Heart right ventricle (tissue), 16 donors: ENCODE measurements at regions of chr2 and their contacts with region 1.

Region 1: GRCh38 chr2:43210467-43211303 is 15.7 kb downstream of the ZFP36L2 start:
- DNase-seq: peak in 1 of 2 donors; percentile 61
- ATAC-seq: peak; percentile 32 to 83 (median 67)
- H3K4me3 ChIP-seq: no peak overlapping the region
- H3K27ac ChIP-seq: peak overlapping the region in 5 of 10 donors; percentile 38 to 72 (median 55)
- H3K4me1 ChIP-seq: peaks cover 0 to 49% (median 5%) of the 10 kb centered on the region in 9 donors
- H3K27me3 ChIP-seq: no peaks in the 10 kb centered on the region
- CTCF ChIP-seq: no peak

Region 2: DNA sequence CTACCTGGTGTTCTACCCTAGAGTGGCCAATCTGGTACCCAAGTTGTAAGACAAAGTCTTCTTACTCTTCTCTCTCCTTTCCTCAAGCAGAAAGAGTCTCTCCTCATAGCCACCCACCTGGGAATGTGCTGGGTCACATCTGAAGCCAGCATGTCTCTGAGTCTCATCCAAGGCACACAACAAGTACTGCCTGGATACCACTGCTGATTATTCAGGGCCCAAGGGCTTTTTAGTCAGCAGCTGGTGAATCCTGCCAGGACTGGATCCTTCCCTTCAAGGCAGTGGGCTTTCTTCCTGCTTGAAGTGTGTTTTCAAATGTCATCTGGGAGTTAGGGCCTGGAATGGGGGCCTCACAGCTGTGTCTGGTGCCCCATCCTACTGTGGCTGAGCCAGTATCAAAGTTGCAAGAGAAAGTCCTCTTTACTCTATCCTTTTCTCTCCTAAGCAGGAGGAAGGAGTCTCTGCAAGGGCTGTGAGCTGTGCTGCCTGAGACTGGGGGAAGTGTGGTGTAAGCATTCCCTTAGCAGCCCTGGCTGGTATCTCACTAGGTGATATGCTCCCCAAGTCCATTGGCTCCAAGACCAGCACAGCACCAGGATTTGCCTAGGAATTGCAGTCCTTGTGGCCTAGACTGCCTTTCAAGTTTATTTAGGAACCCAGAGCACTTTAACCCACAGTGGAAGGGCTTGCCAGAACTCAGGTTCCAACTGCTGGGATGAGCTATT is 473.9 kb before region 1 on chr2:
- intact Hi-C with region 1: no loop called
- DNase-seq: no peak
- ATAC-seq: no peak
- H3K4me3 ChIP-seq: no peak overlapping the region
- H3K27ac ChIP-seq: no peak overlapping the region
- H3K4me1 ChIP-seq: no peaks in the 10 kb centered on the region
- H3K27me3 ChIP-seq: no peaks in the 10 kb centered on the region
- CTCF ChIP-seq: no peak

Region 3: GRCh38 chr2:43169987-43170386 is 40.7 kb before region 1 on chr2:
- intact Hi-C with region 1: loop called in 4 of 10 experiments (anchors 1 to 5 kb)
- DNase-seq: no peak
- ATAC-seq: no peak
- H3K4me3 ChIP-seq: no peak overlapping the region
- H3K27ac ChIP-seq: peak overlapping the region in 4 of 10 donors; percentile 32 to 89 (median 72)
- H3K4me1 ChIP-seq: peaks cover 9 to 78% (median 43%) of the 10 kb centered on the region in 9 donors
- H3K27me3 ChIP-seq: no peaks in the 10 kb centered on the region
- CTCF ChIP-seq: peak in 8 of 9 donors; percentile 11 to 57 (median 42)

Region 4: DNA sequence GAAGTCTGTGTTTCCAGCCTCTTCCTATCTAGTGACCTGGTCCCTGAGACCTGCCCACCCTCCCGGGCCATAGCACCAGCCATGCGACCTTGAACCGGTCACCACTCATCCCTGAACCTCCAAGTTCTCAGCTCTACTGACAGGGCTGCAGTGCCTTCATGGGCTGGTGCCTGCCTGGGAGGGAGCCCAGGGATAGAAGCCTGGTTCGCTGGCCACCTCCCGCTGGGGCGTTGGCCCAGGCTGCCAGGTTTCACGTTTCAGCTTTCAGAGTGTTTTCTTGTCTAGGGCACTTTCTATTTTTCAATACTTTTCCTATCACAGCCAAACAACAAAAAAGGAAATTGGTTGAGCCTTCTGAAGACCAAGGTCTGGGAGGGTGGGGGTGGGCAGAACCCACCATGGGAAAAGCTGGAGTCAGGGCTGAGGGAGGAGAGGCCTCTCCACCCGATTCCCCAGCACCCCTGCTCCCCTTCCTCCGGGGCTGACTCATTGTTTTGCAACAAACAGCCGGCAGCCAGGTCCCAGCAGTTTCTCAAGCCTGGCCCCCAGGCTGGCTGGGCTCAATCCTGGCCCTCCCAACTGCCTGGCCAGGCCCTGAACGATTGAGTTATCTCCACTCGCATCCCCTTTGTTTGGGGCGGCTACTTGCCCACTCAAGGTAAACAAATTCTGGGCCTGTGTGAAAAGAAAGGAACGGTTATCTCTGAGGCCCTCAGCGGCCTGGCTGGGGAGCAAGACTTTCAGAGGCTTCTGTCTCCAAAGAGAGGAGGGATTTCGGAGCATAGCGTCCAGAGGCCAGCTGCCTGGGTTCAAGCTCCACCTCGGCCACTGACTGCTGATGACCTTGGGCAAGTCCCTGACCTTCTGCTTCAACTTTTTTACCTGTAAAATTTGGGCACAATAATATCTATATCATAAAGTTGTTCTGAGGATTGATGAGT is 31.8 kb before region 1 on chr2:
- intact Hi-C with region 1: loop called in 3 of 10 experiments (anchors 5 kb)
- DNase-seq: peak; percentile 68 to 73
- ATAC-seq: peak; percentile 78 to 92 (median 84)
- H3K4me3 ChIP-seq: peak overlapping the region in 1 of 10 donors; percentile 5
- H3K27ac ChIP-seq: peak overlapping the region; percentile 17 to 90 (median 75)
- H3K4me1 ChIP-seq: peaks cover 5 to 53% (median 25%) of the 10 kb centered on the region in 9 donors
- H3K27me3 ChIP-seq: no peaks in the 10 kb centered on the region
- CTCF ChIP-seq: no peak